MCF 10A (cell line): ENCODE measurements at regions of chr4 and their contacts with region 1.

Region 1: DNA sequence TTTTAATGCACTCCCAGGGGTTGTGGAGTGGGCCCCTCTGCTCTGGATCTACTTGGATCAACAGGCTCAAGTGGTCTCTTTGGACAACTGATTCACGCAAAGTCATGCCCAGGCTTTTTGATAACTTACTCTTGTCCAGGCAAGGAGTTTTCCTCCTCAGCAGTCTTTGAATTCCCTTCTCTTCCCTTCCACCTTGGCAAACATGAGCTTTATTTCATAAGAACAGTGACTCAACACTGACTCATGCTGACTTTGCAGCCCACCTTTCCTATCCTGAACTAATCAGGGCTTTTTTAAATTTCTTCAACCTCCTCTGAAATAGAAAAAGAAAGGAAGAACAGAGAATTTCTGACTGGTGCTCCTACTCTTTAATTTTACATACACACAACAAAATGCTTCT is 132.1 kb upstream of the LDB2 start:
- DNase-seq: peak; percentile 91
- H3K4me3 Mint-ChIP-seq: no peak overlapping the region
- H3K27ac Mint-ChIP-seq: peak overlapping the region; percentile 30
- H3K4me1 Mint-ChIP-seq: peaks cover 28% of the 10 kb centered on the region
- H3K27me3 Mint-ChIP-seq: no peaks in the 10 kb centered on the region
- CTCF ChIP-seq: no peak

Region 2: GRCh38 chr4:16875487-16875886 is 155.1 kb before region 1 on chr4:
- CTCF ChIA-PET with region 1: no interaction called
- POLR2A ChIA-PET with region 1: no interaction called
- intact Hi-C with region 1: no loop called
- DNase-seq: no peak
- H3K4me3 Mint-ChIP-seq: no peak overlapping the region
- H3K27ac Mint-ChIP-seq: no peak overlapping the region
- H3K4me1 Mint-ChIP-seq: no peaks in the 10 kb centered on the region
- H3K27me3 Mint-ChIP-seq: peaks cover 14% of the 10 kb centered on the region
- CTCF ChIP-seq: no peak

Region 3: DNA sequence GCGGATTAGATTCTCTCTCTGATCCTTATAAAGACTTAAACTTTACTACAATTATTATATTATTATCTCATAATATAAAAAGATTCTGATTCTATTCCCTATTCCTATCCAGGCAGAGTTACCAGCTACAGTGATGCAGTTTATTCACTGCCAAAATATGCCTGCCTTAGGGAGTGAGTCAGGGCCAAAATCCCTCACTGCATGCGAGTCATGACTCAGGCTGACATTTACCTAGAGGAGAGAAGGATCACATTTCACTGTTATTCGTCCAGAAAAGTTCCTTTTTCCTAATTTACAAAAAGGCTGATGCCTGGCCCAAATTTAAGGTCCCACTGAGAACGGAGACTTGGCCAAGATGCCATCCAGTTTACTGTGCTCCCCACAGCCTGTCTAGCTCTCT is 36.4 kb after region 1 on chr4:
- CTCF ChIA-PET with region 1: no interaction called
- POLR2A ChIA-PET with region 1: interaction called, 3 read pairs
- intact Hi-C with region 1: loop called (anchors 5 kb)
- DNase-seq: peak; percentile 87
- H3K4me3 Mint-ChIP-seq: no peak overlapping the region
- H3K27ac Mint-ChIP-seq: no peak overlapping the region
- H3K4me1 Mint-ChIP-seq: peaks cover 30% of the 10 kb centered on the region
- H3K27me3 Mint-ChIP-seq: no peaks in the 10 kb centered on the region
- CTCF ChIP-seq: no peak